Activated CD4-positive, alpha-beta T cell treated with anti-CD3 and anti-CD28 coated beads for 36 hours (primary cell): ENCODE measurements at regions of chr11 and their contacts with region 1.

Region 1: DNA sequence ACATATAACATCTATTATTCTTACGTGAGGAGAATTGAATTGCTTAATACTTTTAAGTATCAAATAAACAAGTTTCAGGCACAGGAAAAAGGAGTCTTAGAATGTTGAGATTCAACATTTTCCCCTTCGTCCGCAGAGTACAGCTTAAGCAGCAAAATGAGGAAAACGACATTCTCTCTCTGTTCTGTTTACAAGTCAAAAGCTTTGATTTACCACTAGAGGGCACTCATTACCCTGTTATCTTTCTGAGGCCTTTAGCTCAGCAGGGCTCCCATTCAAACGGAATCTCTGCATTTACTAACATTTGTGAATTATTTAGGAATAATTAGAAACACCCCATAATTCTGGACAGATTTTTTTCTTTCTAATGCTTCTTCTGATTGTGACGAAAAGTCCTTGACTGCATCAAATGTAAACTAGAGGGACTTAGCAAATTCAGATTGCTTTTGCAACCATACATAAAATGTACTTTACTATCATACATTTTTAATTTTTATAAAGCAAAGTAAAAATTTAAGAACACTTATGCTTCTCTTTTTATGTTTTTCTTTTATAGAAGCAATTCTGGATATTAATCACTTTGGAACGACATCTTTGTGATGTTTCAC is 75.0 kb downstream of the JRKL start:
- DNase-seq: no peak
- ATAC-seq: peak; percentile 74
- H3K4me3 Mint-ChIP-seq: no peak overlapping the region
- H3K27ac Mint-ChIP-seq: no peak overlapping the region
- H3K4me1 Mint-ChIP-seq: peaks cover 3% of the 10 kb centered on the region
- H3K27me3 Mint-ChIP-seq: peaks cover 5% of the 10 kb centered on the region

Region 2: DNA sequence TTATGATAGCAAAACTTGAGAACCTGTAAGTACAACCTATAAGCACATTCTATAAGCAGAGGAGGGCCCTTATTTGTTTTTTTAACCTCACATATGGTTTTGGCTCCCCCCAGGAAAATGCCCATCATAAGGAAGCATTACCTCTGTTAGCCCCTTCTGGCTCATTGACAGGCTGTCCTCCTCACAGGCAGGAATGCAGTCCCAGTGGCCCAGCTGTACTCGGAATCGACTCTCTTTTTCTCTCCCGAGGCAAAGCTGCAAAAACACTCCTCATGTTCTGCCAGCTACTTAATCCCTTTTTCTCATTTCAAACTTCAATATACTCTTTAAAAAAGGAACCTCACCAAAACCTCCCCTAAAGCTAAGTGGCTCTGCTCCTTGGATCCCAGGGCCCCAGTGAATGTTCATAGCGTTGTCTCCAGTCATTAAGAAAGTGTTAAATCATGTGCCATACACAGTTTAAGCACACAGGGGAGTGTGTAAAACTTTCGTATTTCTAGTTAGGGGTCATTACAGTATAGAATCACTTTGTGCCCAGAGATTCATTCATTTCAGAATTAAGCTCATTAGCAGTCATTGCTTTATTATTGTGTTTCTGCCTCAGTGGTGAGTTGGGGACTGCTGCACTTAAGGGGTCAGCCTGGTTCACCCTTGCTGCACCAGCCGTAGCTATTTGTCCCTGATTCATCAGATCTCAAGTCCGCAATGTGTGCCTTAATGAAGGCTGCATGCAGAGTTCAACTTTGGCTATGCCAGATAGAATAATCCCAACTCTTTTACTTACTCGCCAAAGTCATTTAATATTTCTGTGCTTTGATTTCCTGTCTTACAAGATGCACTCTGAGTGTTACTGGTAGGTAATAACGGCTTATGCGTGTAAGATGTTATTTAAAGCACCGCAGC is 17.3 kb before region 1 on chr11:
- CTCF ChIA-PET with region 1: interaction called, 28 read pairs
- POLR2A ChIA-PET with region 1: no interaction called
- intact Hi-C with region 1: no loop called
- DNase-seq: no peak
- ATAC-seq: no peak
- H3K4me3 Mint-ChIP-seq: no peak overlapping the region
- H3K27ac Mint-ChIP-seq: no peak overlapping the region
- H3K4me1 Mint-ChIP-seq: no peaks in the 10 kb centered on the region
- H3K27me3 Mint-ChIP-seq: peaks cover 8% of the 10 kb centered on the region

Region 3: GRCh38 chr11:96481771-96482170 is 17.0 kb after region 1 on chr11:
- CTCF ChIA-PET with region 1: interaction called, 18 read pairs
- POLR2A ChIA-PET with region 1: interaction called, 3 read pairs
- intact Hi-C with region 1: no loop called
- DNase-seq: no peak
- ATAC-seq: no peak
- H3K4me3 Mint-ChIP-seq: no peak overlapping the region
- H3K27ac Mint-ChIP-seq: no peak overlapping the region
- H3K4me1 Mint-ChIP-seq: no peaks in the 10 kb centered on the region
- H3K27me3 Mint-ChIP-seq: peaks cover 10% of the 10 kb centered on the region

Region 4: GRCh38 chr11:96655474-96655873 is 190.7 kb after region 1 on chr11:
- CTCF ChIA-PET with region 1: interaction called, 12 read pairs
- POLR2A ChIA-PET with region 1: no interaction called
- intact Hi-C with region 1: no loop called
- DNase-seq: no peak
- ATAC-seq: no peak
- H3K4me3 Mint-ChIP-seq: no peak overlapping the region
- H3K27ac Mint-ChIP-seq: no peak overlapping the region
- H3K4me1 Mint-ChIP-seq: no peaks in the 10 kb centered on the region
- H3K27me3 Mint-ChIP-seq: no peaks in the 10 kb centered on the region

Region 5: DNA sequence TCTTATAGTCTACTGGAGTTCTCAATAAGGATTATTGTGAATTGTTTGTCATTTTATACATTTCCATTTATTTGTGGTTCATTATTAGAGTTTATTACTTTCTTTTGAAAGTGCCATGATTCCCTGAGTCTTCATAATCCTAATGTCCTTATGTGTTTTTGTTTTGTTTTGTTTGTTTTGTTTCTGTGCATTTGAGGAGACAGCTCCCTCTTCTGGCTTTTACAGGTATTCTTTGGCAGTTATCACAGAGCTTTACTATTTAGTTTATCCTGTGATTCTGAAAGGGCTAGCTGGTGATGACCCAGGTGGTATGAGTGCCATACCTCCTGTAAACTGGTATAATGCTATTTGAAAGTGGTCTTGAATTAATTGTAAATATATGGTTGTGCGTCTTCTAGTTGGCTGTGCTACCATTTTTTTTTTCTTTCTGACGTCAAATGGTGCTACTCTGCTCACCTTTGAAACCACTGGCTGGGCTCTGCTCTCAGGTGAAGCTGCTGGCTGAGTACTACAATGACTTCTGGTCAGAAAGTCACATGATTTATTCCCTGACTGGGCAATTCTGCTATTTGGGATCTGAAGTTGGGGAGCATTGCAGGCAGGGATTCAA is 676.2 kb after region 1 on chr11:
- CTCF ChIA-PET with region 1: interaction called, 3 read pairs
- POLR2A ChIA-PET with region 1: no interaction called
- intact Hi-C with region 1: loop called in 1 of 2 experiments (anchors 1 kb)
- DNase-seq: no peak
- ATAC-seq: no peak
- H3K4me3 Mint-ChIP-seq: no peak overlapping the region
- H3K27ac Mint-ChIP-seq: no peak overlapping the region
- H3K4me1 Mint-ChIP-seq: no peaks in the 10 kb centered on the region
- H3K27me3 Mint-ChIP-seq: no peaks in the 10 kb centered on the region